GM10248 (cell line): ENCODE measurements at regions of chr4 and their contacts with region 1.

Region 1: GRCh38 chr4:71184195-71184781 is 154.5 kb upstream of the SLC4A4 start:
- DNase-seq: peak; percentile 64
- CTCF ChIP-seq: peak; percentile 81

Region 2: GRCh38 chr4:71194454-71194853 is 10.2 kb after region 1 on chr4:
- CTCF ChIA-PET with region 1: interaction called, 12 read pairs
- POLR2A ChIA-PET with region 1: no interaction called
- DNase-seq: no peak
- CTCF ChIP-seq: no peak

Region 3: DNA sequence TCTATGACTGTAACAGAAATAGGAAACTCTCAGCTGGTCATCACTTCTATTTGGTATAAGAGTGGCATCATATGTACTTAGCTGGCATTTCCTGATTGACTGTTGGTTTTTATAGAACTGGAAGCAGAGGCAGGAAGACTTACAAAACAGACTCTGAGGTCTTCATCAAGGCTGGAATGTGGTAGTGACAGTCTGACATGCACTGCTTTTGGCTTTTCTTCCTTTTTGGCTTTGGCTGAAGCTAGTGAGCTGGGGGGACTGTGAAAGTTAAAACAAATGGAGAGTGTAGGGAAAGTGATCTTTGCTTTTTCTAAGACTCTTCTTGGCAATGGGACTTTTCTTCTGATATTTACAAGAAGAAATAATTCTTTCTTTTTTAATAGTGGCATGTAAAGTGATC is 33.4 kb after region 1 on chr4:
- CTCF ChIA-PET with region 1: interaction called, 12 read pairs
- POLR2A ChIA-PET with region 1: no interaction called
- DNase-seq: no peak
- CTCF ChIP-seq: no peak

Region 4: GRCh38 chr4:71709961-71710360 is 525.7 kb after region 1 on chr4:
- CTCF ChIA-PET with region 1: interaction called, 15 read pairs
- POLR2A ChIA-PET with region 1: no interaction called
- DNase-seq: no peak
- CTCF ChIP-seq: no peak